Activated B cell treated with CpG ODN at 0.5 μM for 24 hours (primary cell): ENCODE measurements at regions of chr10 and their contacts with region 1.

Region 1: DNA sequence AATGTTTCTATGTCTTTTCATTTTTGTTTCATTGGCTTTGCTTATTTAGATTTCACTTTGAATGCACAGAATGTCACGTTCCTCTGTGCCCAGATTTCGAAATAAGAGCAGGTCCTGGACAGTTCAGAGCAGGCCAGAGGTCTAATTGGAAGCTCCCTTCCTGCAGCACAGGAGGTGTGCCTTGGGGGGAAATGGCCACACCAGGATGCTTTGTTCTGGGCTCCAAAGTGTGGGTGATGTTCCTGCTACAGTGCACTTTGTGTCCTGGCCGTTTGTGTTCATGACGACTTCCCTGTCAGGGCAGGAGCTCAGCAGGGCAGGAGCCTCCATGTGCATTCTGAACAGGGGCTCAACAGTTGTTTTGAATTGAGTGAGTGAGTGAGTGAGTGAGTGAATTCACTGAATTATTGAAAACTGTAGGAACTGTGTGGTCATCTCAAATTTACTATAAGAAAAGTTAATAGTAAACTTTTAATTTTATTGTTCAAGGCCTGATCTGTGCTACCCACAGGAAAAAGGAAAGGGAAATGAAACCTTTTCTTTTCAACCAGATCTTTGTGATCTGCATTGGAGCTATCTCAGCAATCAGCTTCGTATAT is 109.5 kb upstream of the GJD4 start:
- DNase-seq: no peak
- ATAC-seq: peak; percentile 62
- H3K4me3 Mint-ChIP-seq: peak overlapping the region; percentile 65
- H3K27ac Mint-ChIP-seq: peak overlapping the region; percentile 89
- H3K4me1 Mint-ChIP-seq: peaks cover 80% of the 10 kb centered on the region
- H3K27me3 Mint-ChIP-seq: no peaks in the 10 kb centered on the region
- CTCF ChIP-seq: no peak

Region 2: DNA sequence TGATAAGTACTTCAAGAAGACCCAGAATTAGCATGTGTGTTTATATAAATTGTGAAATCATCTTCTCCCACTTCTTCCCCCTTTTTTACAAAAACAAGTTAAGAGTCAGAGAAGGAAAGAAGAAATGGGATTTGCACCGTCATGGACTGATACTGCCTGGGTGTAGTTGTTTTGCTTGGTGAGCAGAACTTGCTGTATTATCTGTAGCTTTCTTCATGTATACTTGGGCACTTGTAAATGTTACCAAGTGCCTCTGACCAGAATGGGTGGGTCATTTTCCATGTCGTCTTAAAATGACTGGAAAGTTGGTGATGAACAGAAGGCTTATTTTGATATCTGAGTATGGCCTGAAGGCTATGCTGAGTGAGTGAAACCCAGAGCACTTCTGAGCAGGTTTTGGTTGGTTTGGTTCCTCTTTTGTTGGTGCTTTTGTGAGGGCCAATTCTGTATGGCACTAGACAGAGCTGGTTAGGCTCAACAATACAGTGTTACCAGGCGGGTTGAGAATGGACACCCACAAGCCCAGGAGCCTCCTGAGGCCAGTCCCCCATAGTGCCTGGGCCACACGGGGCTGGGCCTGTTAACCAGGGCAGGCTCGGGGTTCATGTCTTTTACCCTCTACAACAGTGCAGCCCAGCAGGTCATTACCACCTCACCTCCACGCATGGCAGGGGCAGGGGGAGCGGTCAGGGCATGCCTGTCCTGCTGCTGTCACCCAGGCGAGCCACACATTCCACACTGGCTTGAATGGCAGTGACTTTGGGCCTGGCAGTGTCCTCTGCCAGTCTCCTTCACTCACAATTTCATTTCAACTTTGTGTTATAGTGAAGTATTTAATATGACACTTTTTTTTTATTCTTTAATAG is 44.2 kb before region 1 on chr10:
- CTCF ChIA-PET with region 1: no interaction called
- POLR2A ChIA-PET with region 1: interaction called, 4 read pairs
- intact Hi-C with region 1: loop called (anchors 1 kb)
- DNase-seq: no peak
- ATAC-seq: peak; percentile 94
- H3K4me3 Mint-ChIP-seq: peak overlapping the region; percentile 1
- H3K27ac Mint-ChIP-seq: peak overlapping the region; percentile 73
- H3K4me1 Mint-ChIP-seq: peaks cover 80% of the 10 kb centered on the region
- H3K27me3 Mint-ChIP-seq: no peaks in the 10 kb centered on the region
- CTCF ChIP-seq: no peak